ENCODE measurements at regions of chr11 and their contacts with region 1.

Region 1: DNA sequence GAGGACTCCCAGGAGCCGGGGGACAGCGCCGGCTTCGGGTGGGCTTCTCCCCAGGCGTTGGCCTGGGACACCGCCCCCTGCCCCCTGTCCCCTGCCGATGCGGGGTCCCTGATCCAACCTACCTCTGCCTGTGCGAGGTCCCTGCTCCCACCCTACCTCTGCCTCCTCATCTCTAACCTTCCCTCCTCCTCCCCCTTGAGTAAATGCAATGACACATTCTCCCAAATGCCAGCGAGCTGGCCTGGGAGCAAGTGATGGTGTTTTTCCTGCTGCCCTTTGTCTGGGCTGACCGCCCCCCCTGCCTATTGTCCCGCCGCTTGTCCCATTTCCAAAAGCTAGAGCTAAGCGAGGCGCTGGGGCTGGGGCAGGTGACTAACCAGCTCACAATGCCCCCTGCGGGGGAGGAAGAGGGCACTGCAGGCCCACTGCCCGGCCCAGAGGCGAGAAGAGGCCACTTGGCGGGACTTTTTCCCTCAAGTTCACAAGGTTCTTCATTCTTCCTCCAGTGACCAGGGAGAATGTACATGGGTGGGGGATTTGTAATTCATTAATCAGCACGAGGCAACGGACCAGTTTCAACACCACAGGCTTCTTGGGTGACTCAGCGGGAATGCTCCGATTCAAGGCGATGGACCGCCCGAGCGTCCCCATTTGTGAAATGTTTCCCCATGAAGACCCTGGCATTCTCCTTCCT is 674 bp upstream of the CLCF1 start:
- DNase-seq: peak; percentile 39 to 71 (median 46)
- H3K4me3 ChIP-seq: peak overlapping the region; percentile 53
- H3K4me3 Mint-ChIP-seq: peak overlapping the region; percentile 78 to 98 (median 85)
- H3K27ac ChIP-seq: peak overlapping the region; percentile 79
- H3K27ac Mint-ChIP-seq: peak overlapping the region; percentile 74 to 98 (median 88)
- H3K4me1 ChIP-seq: peaks cover 48% of the 10 kb centered on the region
- H3K4me1 Mint-ChIP-seq: peaks cover 39 to 68% (median 45%) of the 10 kb centered on the region in 3 donors
- H3K27me3 ChIP-seq: peaks cover 3% of the 10 kb centered on the region
- H3K27me3 Mint-ChIP-seq: peaks cover 0 to 5% of the 10 kb centered on the region in 2 donors

Region 2: DNA sequence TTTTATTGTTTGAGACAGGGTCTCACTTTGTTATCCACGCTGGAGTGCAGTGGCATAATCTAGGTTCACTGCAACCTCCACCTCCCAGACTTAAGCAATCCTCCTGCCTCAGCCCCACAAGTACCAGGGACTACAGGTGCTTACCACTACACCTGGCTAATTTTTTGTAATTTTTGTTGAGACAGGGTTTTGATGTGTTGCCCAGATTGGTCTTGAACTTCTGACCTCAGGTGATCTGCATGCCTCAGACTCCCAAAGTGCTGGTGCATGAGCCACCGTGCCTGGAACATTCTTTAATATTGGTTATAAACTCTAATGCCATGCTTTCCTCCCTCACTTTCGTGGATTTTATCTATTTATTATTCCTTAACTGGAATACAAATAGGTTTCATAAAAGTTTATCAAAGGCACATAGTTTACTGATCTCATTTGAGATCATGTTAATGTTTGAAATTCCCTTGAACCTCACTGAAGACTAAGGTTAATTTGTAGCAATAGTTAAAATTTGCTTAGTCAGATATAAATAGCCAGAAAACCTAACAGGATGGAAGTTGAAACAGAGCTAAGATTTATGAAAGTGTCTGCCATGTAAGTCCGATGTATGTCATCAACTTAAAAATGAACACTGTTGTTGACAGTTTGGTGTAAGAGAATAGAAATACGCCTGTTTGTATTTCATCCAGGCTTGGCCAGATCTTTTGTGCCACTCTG is 227.4 kb before region 1 on chr11:
- CTCF ChIA-PET with region 1: no interaction called
- POLR2A ChIA-PET with region 1: no interaction called
- DNase-seq: no peak
- H3K4me3 ChIP-seq: no peak overlapping the region
- H3K4me3 Mint-ChIP-seq: peak overlapping the region in 1 of 7 donors; percentile 41
- H3K27ac ChIP-seq: no peak overlapping the region
- H3K27ac Mint-ChIP-seq: peak overlapping the region in 5 of 8 donors; percentile 13 to 50 (median 45)
- H3K4me1 ChIP-seq: no peaks in the 10 kb centered on the region
- H3K4me1 Mint-ChIP-seq: peaks cover 8 to 33% (median 9%) of the 10 kb centered on the region in 3 donors
- H3K27me3 ChIP-seq: no peaks in the 10 kb centered on the region
- H3K27me3 Mint-ChIP-seq: no peaks in the 10 kb centered on the region

Region 3: GRCh38 chr11:67391304-67392132 is 17.4 kb after region 1 on chr11 and contains the start of gene RAD9A:
- CTCF ChIA-PET with region 1: interaction called, 113 read pairs
- POLR2A ChIA-PET with region 1: interaction called, 15 read pairs
- DNase-seq: peak; percentile 88 to 96 (median 94)
- H3K4me3 ChIP-seq: peak within 1 kb of the TSS; percentile 96
- H3K4me3 Mint-ChIP-seq: peak within 1 kb of the TSS; percentile 86 to 94 (median 87)
- H3K27ac ChIP-seq: peak within 1 kb of the TSS; percentile 83
- H3K27ac Mint-ChIP-seq: peak within 1 kb of the TSS; percentile 80 to 96 (median 88)
- H3K4me1 ChIP-seq: peaks cover 25% of the 10 kb centered on the region
- H3K4me1 Mint-ChIP-seq: peaks cover 30 to 48% (median 36%) of the 10 kb centered on the region in 3 donors
- H3K27me3 ChIP-seq: no peaks in the 10 kb centered on the region
- H3K27me3 Mint-ChIP-seq: no peaks in the 10 kb centered on the region
- total RNA-seq, gene RAD9A: 36.8 to 38.8 TPM

Region 4: DNA sequence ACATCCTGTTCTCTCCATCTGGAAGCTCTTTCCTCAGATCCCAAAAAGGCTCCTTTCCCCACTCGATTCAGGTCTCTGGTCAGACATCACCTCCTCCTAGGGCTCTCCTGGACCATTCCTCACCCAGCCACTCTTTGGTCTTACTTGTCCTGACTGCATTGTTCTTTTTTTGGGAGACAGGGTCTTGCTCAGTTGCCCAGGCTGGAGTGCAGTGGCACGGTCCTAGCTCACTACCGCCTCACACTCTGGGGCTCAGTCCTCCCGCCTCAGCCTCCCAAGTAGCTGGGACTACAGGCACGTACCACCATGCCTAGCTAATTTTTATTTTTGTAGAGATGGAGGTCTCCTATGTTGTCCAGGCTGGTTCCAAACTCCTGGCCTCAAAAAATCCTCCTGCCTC is 71.4 kb after region 1 on chr11:
- CTCF ChIA-PET with region 1: no interaction called
- POLR2A ChIA-PET with region 1: interaction called, 11 read pairs
- DNase-seq: no peak
- H3K4me3 ChIP-seq: no peak overlapping the region
- H3K4me3 Mint-ChIP-seq: peak overlapping the region in 6 of 7 donors; percentile 76 to 87 (median 81)
- H3K27ac ChIP-seq: peak overlapping the region; percentile 27
- H3K27ac Mint-ChIP-seq: peak overlapping the region; percentile 95 to 99 (median 98)
- H3K4me1 ChIP-seq: peaks cover 68% of the 10 kb centered on the region
- H3K4me1 Mint-ChIP-seq: peaks cover 48 to 85% (median 58%) of the 10 kb centered on the region in 3 donors
- H3K27me3 ChIP-seq: no peaks in the 10 kb centered on the region
- H3K27me3 Mint-ChIP-seq: no peaks in the 10 kb centered on the region